ENCODE measurements at regions of chr19 and their contacts with region 1.

Region 1: GRCh38 chr19:35352448-35353304 is 5.0 kb downstream of the FFAR1 start:
- DNase-seq: peak; percentile 89

Region 2: DNA sequence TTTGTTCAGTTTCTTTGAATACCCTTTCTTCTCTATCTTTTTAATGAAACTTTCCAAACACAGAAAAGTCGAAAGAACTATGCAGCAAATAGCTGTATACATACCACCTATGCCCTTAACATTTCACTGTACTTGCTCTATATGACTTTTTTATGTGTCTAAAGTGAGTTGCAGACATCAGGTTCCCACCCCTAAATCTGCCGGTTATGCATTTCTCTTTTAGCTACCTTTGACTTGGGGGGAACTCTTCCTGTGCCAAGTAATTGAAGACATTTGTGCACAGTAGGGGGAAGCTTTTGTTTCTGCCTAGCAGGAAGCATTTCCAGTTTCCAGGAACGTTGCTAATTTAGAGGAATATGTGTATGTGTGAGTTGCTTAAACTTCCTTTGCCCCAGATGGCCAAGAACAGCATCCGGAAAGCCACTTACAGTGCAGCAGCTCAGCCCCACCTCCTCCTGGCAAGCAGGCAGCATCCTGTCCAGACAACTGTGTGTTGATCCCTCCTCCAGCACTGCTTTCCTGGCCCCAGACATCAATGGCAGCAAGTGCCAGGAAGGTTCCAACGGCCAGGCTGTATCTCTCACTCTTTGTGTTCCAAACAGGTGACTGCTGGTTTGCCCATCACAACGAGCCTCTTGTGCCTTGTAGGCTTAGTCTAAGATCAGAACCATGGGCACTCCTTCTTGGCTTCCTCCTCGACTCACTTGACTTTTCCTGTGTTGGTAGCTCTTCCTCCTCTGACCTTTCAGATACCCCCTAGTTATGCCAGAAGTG is 367.2 kb before region 1 on chr19:
- intact Hi-C with region 1: no loop called
- DNase-seq: peak; percentile 87

Region 3: GRCh38 chr19:35318650-35319448 is 33.8 kb before region 1 on chr19:
- intact Hi-C with region 1: no loop called
- DNase-seq: no peak

Region 4: GRCh38 chr19:35468637-35469036 is 116.0 kb after region 1 on chr19:
- intact Hi-C with region 1: loop called (anchors 1 kb)
- DNase-seq: no peak

Region 5: DNA sequence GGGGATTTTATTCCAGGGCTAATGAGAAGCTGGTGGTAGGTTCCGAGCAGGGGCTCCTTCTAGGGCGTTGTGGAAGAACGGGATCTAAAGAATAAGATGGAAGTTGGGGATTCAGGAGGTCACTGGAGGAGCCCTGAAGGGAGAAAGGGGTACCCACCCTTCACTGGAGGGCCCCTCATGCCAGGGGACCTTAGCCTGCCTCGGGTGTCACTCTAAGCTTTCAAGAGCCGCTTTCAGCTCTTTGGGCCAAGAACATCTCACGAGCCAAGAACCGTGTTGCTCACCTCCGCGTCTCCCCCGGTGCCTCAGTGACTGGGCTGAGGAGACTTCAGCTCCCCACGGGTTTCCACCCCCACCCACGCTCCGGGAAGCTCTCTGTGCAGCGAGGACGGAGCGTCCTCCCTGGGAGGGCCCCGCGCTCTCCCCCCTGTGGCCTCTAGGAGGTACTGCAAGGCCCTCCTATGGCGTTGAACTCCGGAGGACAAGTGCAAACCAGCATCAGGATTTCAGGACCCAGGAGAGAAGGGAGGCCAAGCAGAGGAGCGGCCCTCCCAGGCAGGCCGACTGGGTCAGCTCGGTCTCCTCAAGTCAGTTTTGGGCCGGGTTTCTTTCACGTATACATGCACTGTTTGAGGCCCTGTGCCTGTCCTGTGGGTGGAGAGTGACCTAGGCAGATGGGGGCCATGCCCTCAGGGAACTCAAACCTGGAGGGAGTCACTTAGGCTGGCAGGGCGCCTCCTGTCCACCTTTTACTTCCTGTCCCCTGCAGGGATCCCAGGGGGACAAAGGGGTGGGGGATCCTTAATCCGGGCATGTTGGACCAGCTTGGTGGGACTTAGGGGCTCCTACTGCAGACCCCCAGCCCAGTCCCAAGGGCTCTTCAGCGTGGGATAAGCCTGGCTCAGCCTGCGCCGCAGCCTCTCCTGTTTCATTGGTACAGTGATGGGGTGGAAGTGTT is 142.7 kb after region 1 on chr19:
- intact Hi-C with region 1: loop called (anchors 1 kb)
- DNase-seq: peak; percentile 88